ENCODE measurements at regions of chr7 and their contacts with region 1.

Region 1: DNA sequence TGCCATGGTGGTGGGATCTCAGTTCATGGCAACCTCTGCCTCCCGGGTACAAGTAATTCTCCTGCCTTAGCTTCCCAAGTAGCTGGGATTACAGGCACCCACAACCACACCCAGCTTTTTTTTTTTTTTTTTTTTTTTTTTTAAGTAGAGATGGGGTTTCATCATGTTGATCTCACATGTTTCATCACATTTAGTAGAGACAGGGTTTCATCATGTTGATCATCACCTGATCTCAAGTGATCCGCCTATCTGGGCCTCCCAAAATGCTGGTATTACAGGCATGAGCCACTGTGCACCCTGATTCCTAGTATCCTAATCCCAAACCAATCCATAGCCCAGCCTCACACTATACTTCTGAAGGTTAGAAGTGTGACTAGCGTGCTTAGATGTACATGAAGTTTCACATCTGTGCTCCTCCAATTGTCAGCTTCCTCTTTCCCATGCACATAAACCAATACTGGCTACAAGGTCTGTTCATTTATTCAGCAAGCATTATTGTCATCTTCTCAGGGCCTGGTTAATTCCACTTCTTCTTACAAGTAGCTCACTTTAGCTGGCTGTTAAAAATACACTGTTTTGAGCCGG is 6.8 kb upstream of the NAT16 start:
- DNase-seq: no peak
- ATAC-seq: no peak
- H3K4me3 ChIP-seq: no peak overlapping the region
- H3K4me3 Mint-ChIP-seq: no peak overlapping the region
- H3K27ac ChIP-seq: no peak overlapping the region
- H3K27ac Mint-ChIP-seq: no peak overlapping the region
- H3K4me1 ChIP-seq: no peaks in the 10 kb centered on the region
- H3K4me1 Mint-ChIP-seq: peaks cover 4% of the 10 kb centered on the region
- H3K27me3 ChIP-seq: peaks cover 0 to 2% of the 10 kb centered on the region in 2 experiments
- H3K27me3 Mint-ChIP-seq: peaks cover 28% of the 10 kb centered on the region
- CTCF ChIP-seq: no peak

Region 2: GRCh38 chr7:101153969-101154692 is 32.8 kb before region 1 on chr7 and contains the start of gene AP1S1:
- CTCF ChIA-PET with region 1: interaction called, 136 read pairs
- POLR2A ChIA-PET with region 1: no interaction called
- intact Hi-C with region 1: no loop called
- DNase-seq: peak; percentile 76 to 96 (median 87)
- ATAC-seq: peak; percentile 88
- H3K4me3 ChIP-seq: peak within 1 kb of the TSS; percentile 61 to 77
- H3K4me3 Mint-ChIP-seq: peak within 1 kb of the TSS; percentile 88
- H3K27ac ChIP-seq: no peak within 1 kb of the TSS
- H3K27ac Mint-ChIP-seq: peak within 1 kb of the TSS; percentile 47
- H3K4me1 ChIP-seq: peaks cover 12% of the 10 kb centered on the region
- H3K4me1 Mint-ChIP-seq: peaks cover 11% of the 10 kb centered on the region
- H3K27me3 ChIP-seq: no peaks in the 10 kb centered on the region
- H3K27me3 Mint-ChIP-seq: peaks cover 9% of the 10 kb centered on the region
- CTCF ChIP-seq: no peak
- total RNA-seq, gene AP1S1: 2.1 to 2.2 TPM

Region 3: DNA sequence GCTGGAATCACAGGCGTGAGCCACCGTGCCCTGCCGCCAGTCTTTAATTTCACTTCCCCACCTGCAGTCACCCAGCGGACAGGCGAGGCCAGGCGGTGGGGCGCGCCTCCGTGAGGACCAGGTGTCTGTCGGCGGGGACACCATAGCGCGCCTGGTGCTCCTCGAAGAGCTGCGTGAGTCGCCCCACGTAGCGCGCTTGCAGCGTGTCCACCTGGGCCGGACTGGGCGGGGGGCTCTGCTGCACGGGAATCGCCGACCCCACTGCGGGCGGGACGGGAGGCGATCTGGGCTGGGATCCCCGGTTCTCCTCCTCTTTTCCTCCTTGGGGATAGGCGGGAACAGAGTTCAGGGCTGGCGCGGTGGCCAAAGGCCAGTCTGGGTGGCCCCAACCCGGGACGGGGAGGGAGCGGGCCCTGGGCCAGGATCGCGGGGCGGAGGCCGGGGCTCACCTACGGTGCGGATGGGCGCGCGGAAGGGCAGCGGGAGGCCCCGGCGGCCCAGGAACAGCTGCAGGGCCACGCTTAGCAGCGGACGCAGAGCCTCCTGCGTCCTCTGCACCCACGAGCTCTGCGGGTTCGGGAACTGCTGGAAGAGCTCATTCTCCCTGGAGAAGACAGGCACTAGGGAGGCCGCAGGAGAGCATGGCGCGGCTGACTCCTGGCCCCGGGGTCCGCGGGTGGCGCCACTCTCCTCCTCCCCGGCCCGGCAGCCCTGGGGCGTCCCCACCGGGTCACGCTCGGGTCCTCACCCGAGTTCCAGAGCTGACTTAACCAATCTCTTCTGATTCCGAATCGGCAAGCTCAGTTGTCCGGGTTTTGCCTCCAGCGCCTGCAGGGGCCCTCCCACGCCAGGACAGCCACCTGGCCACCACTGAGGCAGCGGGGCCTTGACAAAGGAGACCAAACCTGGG is 15.0 kb after region 1 on chr7:
- CTCF ChIA-PET with region 1: interaction called, 25 read pairs
- POLR2A ChIA-PET with region 1: no interaction called
- intact Hi-C with region 1: no loop called
- DNase-seq: no peak
- ATAC-seq: no peak
- H3K4me3 ChIP-seq: no peak overlapping the region
- H3K4me3 Mint-ChIP-seq: no peak overlapping the region
- H3K27ac ChIP-seq: no peak overlapping the region
- H3K27ac Mint-ChIP-seq: no peak overlapping the region
- H3K4me1 ChIP-seq: no peaks in the 10 kb centered on the region
- H3K4me1 Mint-ChIP-seq: peaks cover 16% of the 10 kb centered on the region
- H3K27me3 ChIP-seq: peaks cover 4 to 13% of the 10 kb centered on the region in 2 experiments
- H3K27me3 Mint-ChIP-seq: peaks cover 26% of the 10 kb centered on the region
- CTCF ChIP-seq: no peak

Region 4: DNA sequence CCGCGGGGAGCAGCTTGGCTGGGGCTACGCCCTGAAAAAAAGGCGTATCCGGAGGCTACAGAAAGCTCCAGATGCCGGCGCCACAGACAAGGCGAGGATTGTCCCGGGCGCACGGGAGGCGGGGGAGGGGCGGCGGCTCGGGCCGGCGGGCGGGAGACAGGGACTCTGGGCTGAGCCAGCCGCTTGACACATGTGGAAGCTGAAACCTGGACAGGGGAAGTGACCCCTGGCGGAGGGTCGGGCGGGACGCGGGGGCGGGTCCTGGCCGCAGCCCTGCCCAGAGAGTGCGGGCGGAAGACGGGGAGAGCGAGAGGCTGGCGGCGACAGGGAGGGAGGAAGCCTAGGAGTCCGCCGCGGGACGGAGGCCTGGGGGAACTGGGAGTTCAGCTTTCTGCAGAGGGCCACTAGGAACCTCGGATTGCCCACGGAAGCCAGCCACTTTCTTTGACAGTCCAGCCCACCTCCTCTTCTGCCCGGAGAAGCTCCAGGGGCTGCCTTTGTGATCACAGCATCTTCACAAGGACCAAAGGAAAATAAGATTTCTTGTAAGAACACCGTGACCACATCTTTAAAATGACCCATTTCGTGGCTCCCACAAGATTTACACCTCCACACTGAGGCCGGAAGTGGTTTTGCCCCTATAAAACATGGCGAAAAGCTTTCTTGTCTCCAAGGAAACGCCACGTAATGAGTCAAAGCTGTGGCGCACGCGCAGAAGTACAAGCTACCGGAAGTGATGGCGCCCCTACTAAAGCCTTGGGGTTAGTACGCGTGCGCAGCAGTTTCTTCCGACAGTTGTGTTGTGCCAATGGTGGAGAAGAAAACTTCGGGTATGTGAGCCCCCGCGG is 30.7 kb after region 1 on chr7 and contains the starts of genes PLOD3 and ZNHIT1:
- CTCF ChIA-PET with region 1: interaction called, 18 read pairs
- POLR2A ChIA-PET with region 1: no interaction called
- intact Hi-C with region 1: loop called in 1 of 2 experiments (anchors 2 kb)
- DNase-seq: peak; percentile 89 to 99 (median 96)
- ATAC-seq: peak; percentile 75
- H3K4me3 ChIP-seq: peak within 1 kb of the TSS; percentile 82 to 91
- H3K4me3 Mint-ChIP-seq: peak within 1 kb of the TSS; percentile 94
- H3K27ac ChIP-seq: peak within 1 kb of the TSS; percentile 71 to 84
- H3K27ac Mint-ChIP-seq: peak within 1 kb of the TSS; percentile 91
- H3K4me1 ChIP-seq: peaks cover 29% of the 10 kb centered on the region
- H3K4me1 Mint-ChIP-seq: peaks cover 33% of the 10 kb centered on the region
- H3K27me3 ChIP-seq: no peaks in the 10 kb centered on the region
- H3K27me3 Mint-ChIP-seq: no peaks in the 10 kb centered on the region
- CTCF ChIP-seq: no peak
- total RNA-seq, gene PLOD3: 6.6 to 7.5 TPM
- total RNA-seq, gene ZNHIT1: 23.7 to 24.6 TPM

Region 5: GRCh38 chr7:101287032-101287431 is 100.1 kb after region 1 on chr7:
- CTCF ChIA-PET with region 1: interaction called, 32 read pairs
- POLR2A ChIA-PET with region 1: no interaction called
- intact Hi-C with region 1: loop called (anchors 2 kb)
- DNase-seq: no peak
- ATAC-seq: no peak
- H3K4me3 ChIP-seq: no peak overlapping the region
- H3K4me3 Mint-ChIP-seq: no peak overlapping the region
- H3K27ac ChIP-seq: no peak overlapping the region
- H3K27ac Mint-ChIP-seq: no peak overlapping the region
- H3K4me1 ChIP-seq: peaks cover 4% of the 10 kb centered on the region
- H3K4me1 Mint-ChIP-seq: peaks cover 24% of the 10 kb centered on the region
- H3K27me3 ChIP-seq: peaks cover 0 to 2% of the 10 kb centered on the region in 2 experiments
- H3K27me3 Mint-ChIP-seq: peaks cover 9% of the 10 kb centered on the region
- CTCF ChIP-seq: no peak

Measured in CD8-positive, alpha-beta T cell (primary cell).